ENCODE measurements at regions of chr20 and their contacts with region 1.

Region 1: DNA sequence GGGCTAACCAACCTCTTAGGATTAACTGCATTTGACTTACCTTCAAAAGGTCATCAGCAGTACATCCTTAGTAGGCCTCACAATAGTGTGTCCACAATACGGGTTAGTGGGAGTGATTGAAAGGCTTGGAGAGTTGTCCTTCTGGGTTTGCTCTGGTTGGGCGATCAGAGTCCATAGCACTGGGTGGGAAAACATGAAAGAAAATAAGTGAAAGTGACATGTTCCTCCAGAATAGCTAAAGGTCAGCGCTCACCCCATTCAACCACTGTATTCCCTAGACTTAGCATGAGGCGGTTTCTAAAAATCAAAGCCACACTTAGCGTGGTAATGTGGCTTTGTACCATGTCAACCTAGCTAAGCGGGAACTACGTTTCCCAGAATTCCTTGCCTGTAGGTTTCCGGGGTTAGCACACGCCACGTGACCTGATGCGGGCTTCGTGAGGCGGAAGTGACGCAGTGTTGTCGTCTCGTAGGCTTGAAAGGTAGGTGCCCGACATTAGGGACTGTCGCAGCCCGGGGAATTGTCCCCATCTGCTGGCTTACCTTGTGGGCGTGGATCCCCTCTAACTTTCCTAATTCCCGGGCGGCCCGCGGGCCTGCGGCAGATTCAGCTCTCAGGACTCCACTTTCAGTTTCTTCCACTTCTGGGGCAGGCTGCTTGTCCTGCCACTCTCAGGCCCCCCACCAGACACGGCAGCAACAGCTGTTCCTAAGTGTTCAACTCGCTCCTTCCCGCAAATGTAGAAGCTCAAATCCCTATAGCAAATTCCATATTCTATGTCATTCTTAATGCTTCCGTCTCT is 19.8 kb upstream of the SCP2D1 start:
- DNase-seq: peak; percentile 89 to 96 (median 93)
- ATAC-seq: peak; percentile 99 to 100
- H3K4me3 ChIP-seq: peak overlapping the region; percentile 80
- H3K27ac ChIP-seq: peak overlapping the region; percentile 84
- H3K4me1 ChIP-seq: peaks cover 4% of the 10 kb centered on the region
- H3K27me3 ChIP-seq: no peaks in the 10 kb centered on the region

Region 2: GRCh38 chr20:18632196-18633009 is 161.4 kb before region 1 on chr20:
- intact Hi-C with region 1: loop called in 1 of 4 experiments (anchors 10 kb)
- DNase-seq: peak; percentile 59 to 82 (median 73)
- ATAC-seq: peak; percentile 84 to 92
- H3K4me3 ChIP-seq: no peak overlapping the region
- H3K27ac ChIP-seq: no peak overlapping the region
- H3K4me1 ChIP-seq: no peaks in the 10 kb centered on the region
- H3K27me3 ChIP-seq: no peaks in the 10 kb centered on the region